ENCODE measurements at regions of chr7 and their contacts with region 1.

Region 1: DNA sequence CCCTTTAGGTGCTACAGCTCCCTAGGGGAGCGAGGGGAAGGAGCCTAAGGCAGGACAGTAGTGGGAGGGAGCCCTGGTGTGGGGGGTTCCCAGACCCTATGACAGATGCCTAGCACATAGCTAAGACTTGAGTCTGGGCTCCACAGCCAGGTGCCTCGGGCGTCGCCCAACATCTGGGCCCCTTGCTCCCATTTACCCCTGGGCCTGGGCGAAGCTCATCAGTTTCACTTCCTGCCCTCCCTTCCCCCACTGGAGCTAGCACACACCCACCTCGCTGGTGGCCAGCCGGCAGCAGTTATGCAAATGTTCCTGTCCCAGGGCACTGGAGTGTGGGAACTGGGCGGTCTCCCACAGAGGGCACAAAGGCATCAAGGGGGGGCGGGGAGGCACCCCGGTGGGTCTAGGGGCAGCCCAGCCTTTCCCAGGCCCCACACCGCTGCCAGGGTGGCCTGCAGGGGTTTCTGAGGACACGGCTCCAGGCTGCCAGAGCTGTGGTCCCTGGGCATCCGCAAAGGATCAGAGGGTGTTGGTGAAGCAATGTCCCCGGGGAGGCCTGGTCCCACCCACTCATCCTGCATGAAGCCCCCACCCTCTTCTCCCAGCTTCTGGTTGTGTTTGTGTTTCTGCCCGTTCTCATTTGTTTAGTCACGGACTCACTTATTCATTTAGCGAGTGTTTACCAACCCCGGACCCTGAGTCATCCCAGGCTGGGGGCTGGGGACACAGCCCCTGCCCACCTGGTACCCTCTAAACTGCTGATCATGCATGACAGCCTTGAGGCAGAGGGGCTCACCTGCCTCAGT is 20.4 kb downstream of the SH2B2 start:
- DNase-seq: peak; percentile 90
- ATAC-seq: peak; percentile 86
- H3K4me3 ChIP-seq: peak overlapping the region in 4 of 5 experiments; percentile 37 to 51 (median 44)
- H3K4me3 Mint-ChIP-seq: peak overlapping the region; percentile 84
- H3K27ac ChIP-seq: peak overlapping the region; percentile 93 to 95
- H3K27ac Mint-ChIP-seq: peak overlapping the region; percentile 98
- H3K4me1 ChIP-seq: peaks cover 78 to 90% of the 10 kb centered on the region in 2 donors
- H3K4me1 Mint-ChIP-seq: peaks cover 82% of the 10 kb centered on the region
- H3K27me3 ChIP-seq: no peaks in the 10 kb centered on the region
- H3K27me3 Mint-ChIP-seq: no peaks in the 10 kb centered on the region
- CTCF ChIP-seq: no peak

Region 2: DNA sequence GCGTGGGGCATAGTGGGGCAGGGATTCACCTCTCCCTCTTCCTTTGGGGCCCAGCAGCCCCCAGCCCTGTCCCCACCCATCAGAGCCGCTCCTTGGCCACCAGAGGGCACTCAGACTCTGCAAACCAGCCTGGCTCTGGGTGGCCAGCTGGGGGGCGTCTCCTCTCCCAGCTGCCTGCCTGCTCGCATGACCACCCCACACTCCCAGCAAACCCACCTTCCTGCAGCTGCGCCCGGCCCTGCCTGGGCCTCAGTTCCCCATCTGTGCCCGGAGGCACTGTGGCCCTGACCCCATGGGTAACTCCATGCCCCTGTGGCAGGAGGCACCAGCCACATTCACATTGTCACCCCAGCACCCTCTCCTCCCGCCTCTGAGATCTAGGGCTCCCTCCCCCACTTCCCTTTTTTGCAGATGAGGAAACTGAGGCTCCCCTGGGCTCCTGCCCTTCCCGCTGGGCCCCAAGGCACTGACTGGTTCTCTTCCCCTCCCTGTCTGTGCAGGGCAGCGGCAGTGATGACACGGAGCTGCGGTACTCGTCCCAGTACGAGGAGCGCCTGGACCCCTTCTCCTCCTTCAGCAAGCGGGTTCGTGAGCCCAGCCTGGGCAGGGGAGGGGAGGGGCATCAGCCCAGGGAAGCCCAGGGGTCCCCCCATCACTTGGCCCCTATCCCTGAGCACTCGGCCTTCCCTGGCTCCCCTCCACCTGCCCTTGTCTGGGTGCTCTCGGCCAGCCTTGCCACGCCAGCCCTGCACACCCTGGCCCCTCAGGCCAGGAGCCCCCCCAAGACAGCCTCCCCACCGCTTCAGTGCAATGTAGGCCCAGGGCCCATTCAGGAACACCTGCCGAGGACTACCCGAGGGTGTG is 27.3 kb before region 1 on chr7:
- CTCF ChIA-PET with region 1: interaction called, 16 read pairs
- POLR2A ChIA-PET with region 1: interaction called, 11 read pairs
- intact Hi-C with region 1: no loop called
- DNase-seq: peak; percentile 84
- ATAC-seq: peak; percentile 90
- H3K4me3 ChIP-seq: peak overlapping the region in 3 of 5 experiments; percentile 13 to 44 (median 15)
- H3K4me3 Mint-ChIP-seq: peak overlapping the region; percentile 83
- H3K27ac ChIP-seq: no peak overlapping the region
- H3K27ac Mint-ChIP-seq: peak overlapping the region; percentile 84
- H3K4me1 ChIP-seq: peaks cover 17 to 24% of the 10 kb centered on the region in 2 donors
- H3K4me1 Mint-ChIP-seq: peaks cover 28% of the 10 kb centered on the region
- H3K27me3 ChIP-seq: no peaks in the 10 kb centered on the region
- H3K27me3 Mint-ChIP-seq: no peaks in the 10 kb centered on the region
- CTCF ChIP-seq: peak; percentile 87

Region 3: DNA sequence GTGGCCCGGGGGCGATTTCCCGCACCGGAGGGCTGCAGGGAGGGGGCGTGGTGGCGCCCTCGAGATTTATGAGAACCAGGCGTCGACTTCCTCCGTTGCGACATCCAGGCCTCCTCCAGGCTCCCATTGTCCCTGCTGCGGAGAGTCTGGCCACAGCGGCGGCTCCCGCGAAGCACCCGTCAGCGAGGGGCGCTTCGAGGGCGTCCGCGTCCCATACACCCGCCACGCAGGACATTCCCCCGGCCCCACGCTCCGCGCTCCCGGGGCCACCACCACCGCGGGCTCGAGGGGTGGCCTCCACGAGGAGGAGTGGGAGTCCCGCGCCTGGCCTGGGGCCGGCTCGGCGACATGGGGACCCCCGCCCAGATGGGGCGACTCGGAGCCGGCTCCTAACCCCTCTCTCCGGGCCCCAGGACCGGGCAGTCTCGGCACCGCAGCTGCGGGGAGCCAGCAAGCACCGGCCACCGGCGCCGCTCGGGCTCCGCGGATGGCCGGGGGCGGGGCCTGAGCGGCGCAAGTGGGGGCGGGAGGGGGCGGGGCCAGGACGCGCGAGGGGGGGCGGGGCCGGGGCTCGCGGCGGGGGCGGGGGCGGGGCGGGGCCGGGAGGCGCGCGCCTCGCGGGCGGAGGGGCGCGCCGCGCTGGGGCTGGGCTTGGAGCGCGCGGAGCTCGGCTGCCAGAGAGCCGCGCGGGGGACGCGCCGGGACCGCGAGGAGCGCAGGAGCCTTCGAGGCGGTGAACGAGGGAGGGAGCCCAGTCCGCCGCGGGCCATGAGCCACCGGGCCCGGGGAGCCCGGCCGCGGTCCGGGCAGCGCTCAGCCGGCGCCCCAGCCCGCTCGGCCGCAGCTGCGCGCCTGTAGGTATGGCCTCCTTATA is 20.6 kb before region 1 on chr7 and contains the start of gene SH2B2:
- CTCF ChIA-PET with region 1: interaction called, 75 read pairs
- POLR2A ChIA-PET with region 1: interaction called, 126 read pairs
- intact Hi-C with region 1: loop called (anchors 1 kb)
- DNase-seq: peak; percentile 87
- ATAC-seq: peak; percentile 41
- H3K4me3 ChIP-seq: peak within 1 kb of the TSS; percentile 61 to 97 (median 90)
- H3K4me3 Mint-ChIP-seq: peak within 1 kb of the TSS; percentile 89
- H3K27ac ChIP-seq: peak within 1 kb of the TSS; percentile 50 to 74
- H3K27ac Mint-ChIP-seq: peak within 1 kb of the TSS; percentile 89
- H3K4me1 ChIP-seq: peaks cover 54 to 68% of the 10 kb centered on the region in 2 donors
- H3K4me1 Mint-ChIP-seq: peaks cover 65% of the 10 kb centered on the region
- H3K27me3 ChIP-seq: no peaks in the 10 kb centered on the region
- H3K27me3 Mint-ChIP-seq: no peaks in the 10 kb centered on the region
- CTCF ChIP-seq: no peak
- total RNA-seq, gene SH2B2: 41.2 and 47.7 TPM in 2 replicates

Region 4: GRCh38 chr7:102425639-102426267 is 118.7 kb after region 1 on chr7:
- CTCF ChIA-PET with region 1: no interaction called
- POLR2A ChIA-PET with region 1: interaction called, 3 read pairs
- intact Hi-C with region 1: loop called (anchors 10 kb)
- DNase-seq: peak; percentile 95
- ATAC-seq: peak; percentile 76
- H3K4me3 ChIP-seq: peak overlapping the region; percentile 30 to 48 (median 39)
- H3K4me3 Mint-ChIP-seq: peak overlapping the region; percentile 87
- H3K27ac ChIP-seq: peak overlapping the region; percentile 100
- H3K27ac Mint-ChIP-seq: peak overlapping the region; percentile 100
- H3K4me1 ChIP-seq: peaks cover 94 to 99% of the 10 kb centered on the region in 2 donors
- H3K4me1 Mint-ChIP-seq: peaks cover 79% of the 10 kb centered on the region
- H3K27me3 ChIP-seq: no peaks in the 10 kb centered on the region
- H3K27me3 Mint-ChIP-seq: no peaks in the 10 kb centered on the region
- CTCF ChIP-seq: no peak

Region 5: DNA sequence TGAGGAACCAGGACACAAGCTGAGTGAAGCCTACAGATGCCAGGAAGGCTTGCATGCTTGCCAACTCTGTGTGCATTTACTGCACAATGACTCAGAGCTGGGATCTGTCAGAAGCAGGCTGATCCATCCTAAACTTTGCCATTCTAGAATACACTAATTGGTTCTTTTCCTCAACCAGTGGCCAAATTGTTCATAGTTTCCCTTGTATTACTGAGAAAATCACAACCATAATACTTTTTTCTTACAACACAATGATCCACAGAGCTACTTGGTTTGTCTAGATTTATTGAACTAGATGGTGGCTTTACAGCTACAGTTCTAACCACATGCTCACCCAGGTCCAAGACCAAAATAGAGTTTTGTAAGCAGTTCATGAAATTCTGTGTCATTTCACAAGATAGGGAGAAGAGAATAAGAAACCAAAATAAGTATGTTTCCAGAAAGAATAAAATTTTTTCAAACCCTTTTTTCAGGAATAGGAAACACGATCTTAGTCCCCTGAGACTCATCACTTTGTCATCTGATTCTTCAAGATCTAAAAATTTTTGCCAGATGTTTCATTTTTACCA is 584.7 kb after region 1 on chr7:
- CTCF ChIA-PET with region 1: no interaction called
- POLR2A ChIA-PET with region 1: no interaction called
- intact Hi-C with region 1: no loop called
- DNase-seq: no peak
- ATAC-seq: no peak
- H3K4me3 ChIP-seq: no peak overlapping the region
- H3K4me3 Mint-ChIP-seq: no peak overlapping the region
- H3K27ac ChIP-seq: no peak overlapping the region
- H3K27ac Mint-ChIP-seq: no peak overlapping the region
- H3K4me1 ChIP-seq: no peaks in the 10 kb centered on the region
- H3K4me1 Mint-ChIP-seq: peaks cover 3% of the 10 kb centered on the region
- H3K27me3 ChIP-seq: no peaks in the 10 kb centered on the region
- H3K27me3 Mint-ChIP-seq: no peaks in the 10 kb centered on the region
- CTCF ChIP-seq: no peak

Measured in B cell (primary cell).